ENCODE measurements at regions of chr17 and their contacts with region 1.

Region 1: DNA sequence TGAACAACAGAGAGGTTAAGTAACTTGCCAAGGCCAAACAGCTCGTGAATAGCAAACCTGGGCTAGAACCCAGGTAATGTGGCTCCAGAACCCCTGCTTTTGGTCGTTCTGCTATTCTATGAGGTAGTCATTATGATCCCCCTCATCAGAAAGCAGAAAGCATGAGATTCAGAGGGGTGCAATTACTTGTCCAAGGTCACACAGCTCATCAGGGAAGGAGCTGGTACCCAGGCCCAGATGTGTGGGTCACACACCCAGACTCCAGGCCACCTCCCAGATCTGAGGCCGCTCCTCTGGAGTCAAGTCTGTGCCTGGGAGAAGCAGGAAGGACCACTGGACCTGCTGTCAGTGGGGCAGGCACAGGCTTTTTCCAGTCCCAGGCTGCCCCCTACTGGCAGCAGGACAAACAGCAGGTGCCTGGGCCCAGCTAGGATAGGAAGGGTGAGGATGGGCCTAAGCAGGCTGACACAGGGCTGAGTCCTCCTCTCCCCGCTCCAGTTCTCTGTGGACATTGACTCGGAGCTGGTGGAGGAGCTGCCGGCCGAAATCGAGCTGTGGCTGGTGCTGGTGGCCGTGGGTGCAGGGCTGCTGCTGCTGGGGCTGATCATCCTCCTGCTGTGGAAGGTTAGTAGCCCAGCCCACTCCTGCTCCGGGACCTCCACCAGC is 7.8 kb upstream of the PDK2 start:
- DNase-seq: peak; percentile 88
- CTCF ChIP-seq: peak; percentile 99

Region 2: GRCh38 chr17:50020841-50021599 is 66.4 kb before region 1 on chr17:
- CTCF ChIA-PET with region 1: interaction called, 75 read pairs
- POLR2A ChIA-PET with region 1: no interaction called
- DNase-seq: no peak
- CTCF ChIP-seq: no peak

Region 3: DNA sequence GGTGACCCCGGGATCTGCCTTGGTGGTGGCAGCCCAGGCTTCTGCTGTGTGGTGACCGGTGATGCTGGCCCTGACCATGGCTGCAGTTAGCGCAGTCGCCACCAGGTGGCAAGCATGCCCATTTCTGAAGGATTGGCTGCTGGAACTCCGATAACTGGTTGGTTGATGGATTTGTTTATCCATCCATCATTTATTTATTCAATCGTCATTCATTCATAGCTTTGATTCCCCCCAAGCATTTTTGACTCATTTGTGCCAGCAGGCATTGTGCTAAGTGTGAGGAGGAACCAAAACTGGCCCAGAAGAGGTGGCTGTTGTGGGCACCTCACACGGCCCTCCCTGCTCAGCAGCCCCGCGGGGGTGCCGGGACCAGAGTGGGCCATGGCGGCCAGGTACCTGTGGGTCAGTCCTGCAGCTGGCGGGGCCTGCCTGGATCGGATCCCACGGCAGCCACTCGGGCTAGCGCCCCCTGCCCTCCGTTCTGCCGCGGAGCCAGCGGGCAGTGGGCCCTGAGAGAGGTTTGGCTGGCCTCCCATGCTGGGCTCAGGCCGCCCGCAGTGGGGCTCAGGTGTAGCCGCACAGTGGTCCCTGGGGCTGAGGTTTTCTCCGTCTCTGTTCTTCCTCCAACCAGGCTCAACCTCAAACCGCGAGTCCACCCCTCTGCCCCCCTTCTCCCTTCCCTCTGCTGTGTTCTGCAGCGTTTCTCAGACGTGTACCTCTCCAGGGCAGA is 60.3 kb before region 1 on chr17:
- CTCF ChIA-PET with region 1: interaction called, 75 read pairs
- POLR2A ChIA-PET with region 1: no interaction called
- DNase-seq: peak; percentile 88
- CTCF ChIP-seq: peak; percentile 97

Region 4: DNA sequence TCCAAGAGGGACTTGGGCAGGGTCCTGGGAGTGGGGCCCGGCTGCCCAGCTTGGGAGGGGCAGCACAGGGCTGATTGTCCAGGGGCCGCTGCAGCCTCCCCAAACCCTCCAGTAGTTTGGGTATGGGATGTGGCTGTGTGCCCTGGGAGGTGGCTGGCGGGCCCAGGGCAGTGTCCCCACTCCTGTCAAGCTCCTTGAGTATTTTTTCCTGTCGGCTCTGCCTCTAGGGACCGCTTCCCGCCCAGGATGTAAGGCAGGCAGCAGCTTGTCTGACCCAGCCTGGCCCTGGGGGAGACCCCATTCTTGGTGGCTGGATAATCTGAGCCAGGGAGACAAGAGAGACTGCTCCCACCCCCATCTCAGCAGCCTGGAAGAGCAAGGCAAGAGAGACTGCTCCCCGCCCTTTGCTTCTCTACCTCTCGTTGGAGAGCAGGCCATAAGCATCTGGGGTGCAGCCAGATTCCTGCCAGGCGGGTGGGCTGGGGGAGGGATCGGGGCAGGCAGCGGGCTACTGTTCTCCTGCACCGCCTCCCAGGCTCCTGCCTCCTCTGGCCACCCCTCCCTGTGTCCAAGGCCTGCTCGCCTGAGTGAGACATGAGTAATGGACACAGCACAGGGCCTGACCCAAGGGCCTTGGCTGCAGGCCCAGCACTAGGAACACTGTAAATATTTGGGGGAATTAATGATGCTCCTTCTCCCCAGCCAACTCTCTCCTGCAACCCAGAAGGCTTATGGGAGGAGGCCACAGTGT is 49.9 kb before region 1 on chr17:
- CTCF ChIA-PET with region 1: interaction called, 75 read pairs
- POLR2A ChIA-PET with region 1: no interaction called
- DNase-seq: no peak
- CTCF ChIP-seq: no peak

Region 5: GRCh38 chr17:50055426-50056230 is 31.8 kb before region 1 on chr17 and contains the start of gene ITGA3:
- CTCF ChIA-PET with region 1: interaction called, 18 read pairs
- POLR2A ChIA-PET with region 1: no interaction called
- DNase-seq: peak; percentile 68
- CTCF ChIP-seq: no peak

Region 6: DNA sequence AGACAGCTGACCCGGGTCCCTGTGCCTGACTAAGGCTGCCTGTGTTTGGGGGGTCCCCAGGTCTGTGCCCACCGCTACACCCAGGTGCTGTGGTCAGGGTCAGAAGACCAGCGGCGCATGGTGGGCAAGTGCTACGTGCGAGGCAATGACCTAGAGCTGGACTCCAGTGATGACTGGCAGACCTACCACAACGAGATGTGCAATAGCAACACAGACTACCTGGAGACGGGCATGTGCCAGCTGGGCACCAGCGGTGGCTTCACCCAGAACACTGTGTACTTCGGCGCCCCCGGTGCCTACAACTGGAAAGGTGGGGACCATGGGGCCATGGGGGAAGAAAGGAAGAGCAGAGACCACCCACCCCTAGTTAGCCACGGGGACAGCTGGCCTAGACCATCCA is 19.4 kb before region 1 on chr17:
- CTCF ChIA-PET with region 1: interaction called, 12 read pairs
- POLR2A ChIA-PET with region 1: no interaction called
- DNase-seq: no peak
- CTCF ChIP-seq: no peak

Region 7: GRCh38 chr17:50101346-50102163 is 14.2 kb after region 1 on chr17:
- CTCF ChIA-PET with region 1: interaction called, 246 read pairs
- POLR2A ChIA-PET with region 1: no interaction called
- DNase-seq: no peak
- CTCF ChIP-seq: no peak

Measured in GM10248 (cell line).